RWPE1 (cell line): ENCODE measurements at regions of chr1 and their contacts with region 1.

Region 1: GRCh38 chr1:155193275-155193990 is 14.3 kb downstream of the THBS3 start:
- DNase-seq: peak; percentile 87
- H3K27ac ChIP-seq: peak overlapping the region; percentile 99
- CTCF ChIP-seq: peak; percentile 97

Region 2: DNA sequence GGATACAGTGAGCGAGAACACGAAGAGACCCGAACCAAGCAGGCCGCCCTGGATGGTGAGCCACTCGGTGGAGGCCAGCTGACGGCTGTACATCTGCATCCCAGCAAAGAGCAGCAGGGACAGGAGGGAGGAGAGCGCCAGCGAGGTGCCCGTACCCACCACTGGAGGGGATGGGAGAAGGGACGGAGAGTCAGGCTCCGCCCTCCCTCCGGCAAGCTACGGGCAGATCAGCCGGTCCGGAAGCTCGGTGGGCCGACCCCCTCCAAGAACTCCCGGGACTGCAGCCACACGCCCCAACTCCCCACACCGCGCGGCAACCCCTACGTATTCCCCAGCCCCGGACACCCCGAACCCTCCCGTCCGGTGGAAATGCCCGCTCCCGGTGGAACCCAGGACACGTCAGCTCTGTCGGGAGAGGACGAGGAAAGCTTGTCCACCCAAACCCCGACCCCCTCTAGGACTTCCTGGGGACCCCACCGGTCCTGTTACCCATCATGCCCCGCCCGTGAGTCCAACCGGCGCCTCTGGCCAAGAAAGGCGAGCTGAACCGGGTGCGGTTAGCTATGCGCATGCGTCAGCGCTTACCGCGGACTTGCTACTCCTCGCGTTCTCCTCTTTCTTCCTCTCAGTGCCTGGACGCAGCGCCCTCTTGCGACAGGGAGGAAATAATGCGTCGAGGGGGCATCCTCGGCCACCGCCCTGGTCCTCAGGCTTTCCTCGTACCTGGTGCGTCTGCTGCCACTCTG is 20.5 kb before region 1 on chr1 and contains the start of gene KRTCAP2:
- CTCF ChIA-PET with region 1: interaction called, 25 read pairs
- POLR2A ChIA-PET with region 1: interaction called, 5 read pairs
- DNase-seq: peak; percentile 98
- H3K27ac ChIP-seq: peak within 1 kb of the TSS; percentile 87
- CTCF ChIP-seq: peak; percentile 93